Lower leg skin (tissue), 4 donors: ENCODE measurements at regions of chr21 and their contacts with region 1.

Region 1: GRCh38 chr21:28336314-28336713 is 656.4 kb downstream of the LTN1 start:
- DNase-seq: peak in 1 of 2 donors; percentile 28
- H3K4me3 ChIP-seq: no peak overlapping the region
- CTCF ChIP-seq: no peak
- POLR2A ChIP-seq: no peak

Region 2: GRCh38 chr21:27700974-27701614 is 635.2 kb before region 1 on chr21:
- intact Hi-C with region 1: loop called (anchors 5 kb)
- DNase-seq: peak; percentile 78 to 95
- H3K4me3 ChIP-seq: no peak overlapping the region
- CTCF ChIP-seq: no peak
- POLR2A ChIP-seq: no peak

Region 3: DNA sequence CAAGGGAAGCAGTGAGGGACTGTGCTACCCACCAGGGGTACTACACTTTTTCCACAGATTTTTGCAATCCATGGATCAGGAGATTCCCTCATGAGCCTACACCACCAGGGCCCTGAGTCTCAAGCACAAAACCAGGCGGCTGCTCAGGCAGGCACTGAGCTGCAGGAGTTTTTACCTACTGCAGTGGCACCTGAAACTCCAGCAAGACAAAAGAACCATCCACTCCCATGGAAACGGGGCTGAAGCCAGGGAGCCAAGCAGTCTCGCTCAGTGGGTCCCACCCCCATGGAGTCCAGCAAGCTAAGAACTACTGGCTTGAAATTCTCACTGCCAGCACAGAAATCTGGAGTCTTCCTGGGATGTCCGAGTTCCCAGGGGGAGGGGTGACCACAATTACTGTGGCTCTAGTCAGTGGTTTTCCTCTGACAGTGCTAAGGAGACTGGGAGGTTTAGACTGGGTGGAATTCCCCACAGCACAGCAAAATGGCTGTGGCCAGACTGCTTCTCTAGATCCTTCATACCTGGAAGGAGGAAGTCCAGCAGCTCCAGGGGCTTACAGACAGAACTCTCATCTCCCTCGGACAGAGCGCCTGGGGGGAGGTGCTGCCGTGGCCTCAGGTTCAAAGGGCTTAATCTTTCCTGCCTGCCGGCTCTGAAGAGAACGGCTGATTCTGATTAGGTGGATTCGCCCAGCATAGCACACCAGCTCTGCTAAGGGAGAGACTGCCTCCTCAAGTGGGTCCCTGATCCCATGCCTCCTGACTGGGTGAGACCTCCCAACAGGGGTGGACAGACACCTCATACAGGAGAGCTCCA is 218.6 kb after region 1 on chr21:
- intact Hi-C with region 1: no loop called
- DNase-seq: no peak
- H3K4me3 ChIP-seq: no peak overlapping the region
- CTCF ChIP-seq: no peak
- POLR2A ChIP-seq: no peak